Activated CD4-positive, alpha-beta T cell treated with anti-CD3 and anti-CD28 coated beads for 36 hours (primary cell): ENCODE measurements at regions of chr11 and their contacts with region 1.

Region 1: GRCh38 chr11:119057000-119057769 is at the start of gene HYOU1:
- DNase-seq: peak; percentile 100
- ATAC-seq: peak; percentile 96
- H3K4me3 Mint-ChIP-seq: peak within 1 kb of the TSS; percentile 82
- H3K27ac Mint-ChIP-seq: peak within 1 kb of the TSS; percentile 94
- H3K4me1 Mint-ChIP-seq: peaks cover 34% of the 10 kb centered on the region
- H3K27me3 Mint-ChIP-seq: no peaks in the 10 kb centered on the region
- total RNA-seq, gene HYOU1: 104 to 114 TPM

Region 2: GRCh38 chr11:119018074-119018938 is 38.9 kb before region 1 on chr11 and contains the starts of genes RPS25 and TRAPPC4:
- CTCF ChIA-PET with region 1: interaction called, 5 read pairs
- POLR2A ChIA-PET with region 1: no interaction called
- intact Hi-C with region 1: loop called (anchors 1 to 2 kb)
- DNase-seq: peak; percentile 98
- ATAC-seq: peak; percentile 92
- H3K4me3 Mint-ChIP-seq: peak within 1 kb of the TSS; percentile 99
- H3K27ac Mint-ChIP-seq: peak within 1 kb of the TSS; percentile 99
- H3K4me1 Mint-ChIP-seq: peaks cover 53% of the 10 kb centered on the region
- H3K27me3 Mint-ChIP-seq: no peaks in the 10 kb centered on the region
- total RNA-seq, gene RPS25: 1,590 to 1,820 TPM
- total RNA-seq, gene TRAPPC4: 62.2 to 81.9 TPM

Region 3: GRCh38 chr11:119042927-119043326 is 14.3 kb before region 1 on chr11:
- CTCF ChIA-PET with region 1: interaction called, 10 read pairs
- POLR2A ChIA-PET with region 1: interaction called, 5 read pairs
- intact Hi-C with region 1: no loop called
- DNase-seq: no peak
- ATAC-seq: no peak
- H3K4me3 Mint-ChIP-seq: no peak overlapping the region
- H3K27ac Mint-ChIP-seq: no peak overlapping the region
- H3K4me1 Mint-ChIP-seq: peaks cover 12% of the 10 kb centered on the region
- H3K27me3 Mint-ChIP-seq: no peaks in the 10 kb centered on the region

Region 4: GRCh38 chr11:119101759-119102423 is 44.7 kb after region 1 on chr11 and contains the start of gene DPAGT1:
- CTCF ChIA-PET with region 1: interaction called, 3 read pairs
- POLR2A ChIA-PET with region 1: interaction called, 3 read pairs
- intact Hi-C with region 1: loop called in 1 of 2 experiments (anchors 1 kb)
- DNase-seq: peak; percentile 93
- ATAC-seq: peak; percentile 86
- H3K4me3 Mint-ChIP-seq: peak within 1 kb of the TSS; percentile 95
- H3K27ac Mint-ChIP-seq: peak within 1 kb of the TSS; percentile 100
- H3K4me1 Mint-ChIP-seq: peaks cover 42% of the 10 kb centered on the region
- H3K27me3 Mint-ChIP-seq: no peaks in the 10 kb centered on the region
- total RNA-seq, gene DPAGT1: 57.8 to 73.5 TPM

Region 5: DNA sequence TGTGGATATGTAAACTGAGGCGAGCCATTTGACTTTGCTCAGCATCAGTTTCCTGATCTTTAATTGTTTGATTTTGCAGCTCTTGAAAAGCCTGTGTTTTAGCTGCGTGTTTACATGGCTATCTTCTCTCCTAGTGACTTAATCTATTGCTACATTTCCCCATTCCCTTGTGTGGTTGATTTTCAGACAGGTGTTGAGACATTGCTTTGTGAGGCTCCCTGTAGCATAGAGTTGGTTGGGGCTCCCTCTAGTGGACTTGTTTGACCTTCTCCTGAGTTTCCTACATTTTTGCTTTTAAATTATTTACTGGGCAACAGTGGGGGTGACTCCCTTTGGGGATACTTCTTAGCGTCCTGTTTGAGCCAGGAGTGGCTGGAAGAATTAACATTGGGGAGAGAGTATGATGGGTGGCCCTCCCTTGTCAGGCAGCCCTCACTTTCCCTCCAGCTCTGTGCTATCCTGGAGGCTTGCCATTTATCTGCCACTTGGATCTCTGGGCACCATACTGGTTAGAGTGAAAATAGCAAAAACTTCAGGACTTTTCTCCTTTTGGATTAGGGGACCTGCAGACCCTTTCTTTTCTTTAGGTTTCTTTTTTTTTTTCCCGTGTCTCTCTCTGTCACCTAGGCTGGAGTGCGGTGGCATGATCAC is 139.8 kb after region 1 on chr11:
- CTCF ChIA-PET with region 1: no interaction called
- POLR2A ChIA-PET with region 1: no interaction called
- intact Hi-C with region 1: loop called in 1 of 2 experiments (anchors 2 kb)
- DNase-seq: peak; percentile 80
- ATAC-seq: peak; percentile 97
- H3K4me3 Mint-ChIP-seq: no peak overlapping the region
- H3K27ac Mint-ChIP-seq: no peak overlapping the region
- H3K4me1 Mint-ChIP-seq: peaks cover 2% of the 10 kb centered on the region
- H3K27me3 Mint-ChIP-seq: no peaks in the 10 kb centered on the region